ENCODE measurements at regions of chr19 and their contacts with region 1.

Region 1: GRCh38 chr19:38089440-38089839 is 134.6 kb downstream of the DPF1 start:
- DNase-seq: no peak
- ATAC-seq: no peak
- H3K4me3 ChIP-seq: no peak overlapping the region
- H3K27ac ChIP-seq: no peak overlapping the region
- H3K4me1 ChIP-seq: no peaks in the 10 kb centered on the region
- H3K27me3 ChIP-seq: no peaks in the 10 kb centered on the region
- CTCF ChIP-seq: no peak

Region 2: DNA sequence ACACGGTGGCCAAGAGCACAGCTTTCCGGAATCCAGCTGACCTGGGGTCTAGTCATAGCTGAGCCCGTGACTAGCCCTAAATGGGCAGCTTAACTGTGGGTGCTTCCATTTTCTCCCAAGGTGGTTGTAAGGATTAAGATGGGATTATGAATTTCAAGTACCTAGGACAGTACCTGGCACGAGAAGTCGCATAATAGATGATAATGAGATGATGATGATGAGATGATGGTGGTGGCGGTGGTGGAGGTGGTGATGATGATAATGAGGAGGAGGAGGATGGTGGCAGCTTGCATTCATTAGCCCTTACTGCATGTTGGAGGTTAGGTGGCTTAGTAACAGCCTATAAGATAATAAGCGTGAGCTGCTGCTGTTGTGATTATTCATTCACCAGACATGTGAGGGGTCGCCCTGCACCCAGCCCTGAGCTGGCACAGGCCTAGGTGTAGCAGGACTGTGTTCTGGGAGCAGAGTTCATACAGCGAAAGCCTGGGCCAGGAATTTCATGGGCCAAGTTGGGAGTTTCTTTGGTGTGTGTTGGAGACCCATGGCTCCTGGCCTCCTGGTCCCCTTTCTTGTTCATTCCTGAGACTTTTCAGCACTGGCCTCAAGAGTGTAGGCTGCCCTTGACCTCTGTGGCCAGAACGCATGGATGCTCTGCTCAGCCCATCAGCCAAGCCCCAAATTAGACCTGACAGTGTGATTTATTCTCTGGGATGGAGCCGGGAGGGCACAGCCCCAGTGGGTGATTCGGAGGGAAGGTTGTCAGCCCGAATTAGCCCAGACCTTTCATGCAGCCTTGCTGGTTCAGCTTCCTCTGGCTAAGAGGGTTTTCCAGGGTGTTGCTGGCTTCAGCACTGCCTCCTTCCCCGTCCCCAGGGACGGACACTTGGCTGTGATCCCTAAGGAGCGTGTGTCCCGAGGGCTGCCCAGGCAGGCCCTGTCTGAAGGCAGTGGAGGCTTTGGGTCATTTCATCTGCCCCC is 53.6 kb before region 1 on chr19:
- CTCF ChIA-PET with region 1: interaction called, 11 read pairs
- POLR2A ChIA-PET with region 1: no interaction called
- in situ Hi-C with region 1: no loop called
- intact Hi-C with region 1: no loop called
- DNase-seq: no peak
- ATAC-seq: no peak
- H3K4me3 ChIP-seq: no peak overlapping the region
- H3K27ac ChIP-seq: no peak overlapping the region
- H3K4me1 ChIP-seq: no peaks in the 10 kb centered on the region; the same call in 1 of the 2 replicates
- H3K27me3 ChIP-seq: no peaks in the 10 kb centered on the region
- CTCF ChIP-seq: no peak

Measured in Panc1 (cell line).